Spleen (tissue), 13 donors: ENCODE measurements at regions of chr12 and their contacts with region 1.

Region 1: DNA sequence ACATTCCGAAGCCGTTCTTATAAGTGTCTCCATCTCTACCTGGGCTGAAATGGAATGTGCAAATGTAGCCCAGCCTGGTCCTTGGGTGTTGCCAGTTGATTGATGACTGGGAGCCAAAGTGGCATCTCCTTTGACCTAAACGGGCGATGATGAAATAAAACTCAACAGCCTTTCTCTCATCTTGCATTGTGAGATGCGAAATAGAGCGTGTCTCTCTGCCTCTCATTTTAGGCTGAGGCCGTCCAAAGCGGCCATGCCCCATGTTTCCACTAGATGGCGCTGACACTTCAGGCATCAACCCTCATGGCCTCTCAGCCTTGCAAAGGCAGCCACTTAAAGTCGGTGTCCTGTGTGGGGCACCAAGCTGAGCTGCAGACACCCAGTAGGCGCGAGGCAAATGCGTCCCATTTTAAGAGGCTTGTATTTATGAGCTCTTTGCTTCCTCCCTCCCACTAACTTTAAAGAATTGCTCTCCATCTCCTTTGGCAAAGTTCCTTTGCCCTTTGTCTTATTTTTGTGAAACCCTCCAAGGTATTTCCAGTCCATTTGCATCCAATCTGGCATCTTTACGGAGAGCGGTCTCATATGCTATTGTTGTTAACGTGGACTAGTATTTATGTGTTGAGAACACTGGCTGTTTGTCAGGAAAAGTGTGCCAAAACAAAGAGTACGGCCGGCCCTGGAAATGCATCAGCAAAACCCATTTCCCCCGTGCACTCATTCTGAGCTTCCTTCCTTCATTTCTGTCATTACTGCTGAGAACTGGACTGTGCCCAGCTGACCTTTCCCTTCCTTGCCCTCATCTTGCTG is 25.0 kb downstream of the GPRC5A start:
- DNase-seq: peak; percentile 94
- H3K4me3 ChIP-seq: peak overlapping the region in 2 of 8 donors; percentile 3 to 41
- H3K27ac ChIP-seq: peak overlapping the region in 6 of 8 donors; percentile 48 to 72 (median 64)
- H3K4me1 ChIP-seq: peaks cover 5 to 19% (median 15%) of the 10 kb centered on the region in 6 donors
- H3K27me3 ChIP-seq: peaks cover 0 to 7% (median 0%) of the 10 kb centered on the region in 7 donors
- CTCF ChIP-seq: peak; percentile 96 to 99 (median 98)
- POLR2A ChIP-seq: no peak

Region 2: GRCh38 chr12:12456637-12457036 is 459.7 kb before region 1 on chr12:
- intact Hi-C with region 1: no loop called
- DNase-seq: no peak
- H3K4me3 ChIP-seq: no peak overlapping the region
- H3K27ac ChIP-seq: peak overlapping the region in 5 of 8 donors; percentile 6 to 58 (median 45)
- H3K4me1 ChIP-seq: peaks cover 0 to 11% (median 1%) of the 10 kb centered on the region in 6 donors
- H3K27me3 ChIP-seq: no peaks in the 10 kb centered on the region
- CTCF ChIP-seq: no peak
- POLR2A ChIP-seq: no peak

Region 3: GRCh38 chr12:13218641-13219040 is 302.3 kb after region 1 on chr12:
- intact Hi-C with region 1: loop called (anchors 5 kb)
- DNase-seq: no peak
- H3K4me3 ChIP-seq: no peak overlapping the region
- H3K27ac ChIP-seq: no peak overlapping the region
- H3K4me1 ChIP-seq: no peaks in the 10 kb centered on the region
- H3K27me3 ChIP-seq: no peaks in the 10 kb centered on the region
- CTCF ChIP-seq: no peak
- POLR2A ChIP-seq: no peak